Endothelial cell of umbilical vein (primary cell): ENCODE measurements at regions of chr14 and their contacts with region 1.

Region 1: DNA sequence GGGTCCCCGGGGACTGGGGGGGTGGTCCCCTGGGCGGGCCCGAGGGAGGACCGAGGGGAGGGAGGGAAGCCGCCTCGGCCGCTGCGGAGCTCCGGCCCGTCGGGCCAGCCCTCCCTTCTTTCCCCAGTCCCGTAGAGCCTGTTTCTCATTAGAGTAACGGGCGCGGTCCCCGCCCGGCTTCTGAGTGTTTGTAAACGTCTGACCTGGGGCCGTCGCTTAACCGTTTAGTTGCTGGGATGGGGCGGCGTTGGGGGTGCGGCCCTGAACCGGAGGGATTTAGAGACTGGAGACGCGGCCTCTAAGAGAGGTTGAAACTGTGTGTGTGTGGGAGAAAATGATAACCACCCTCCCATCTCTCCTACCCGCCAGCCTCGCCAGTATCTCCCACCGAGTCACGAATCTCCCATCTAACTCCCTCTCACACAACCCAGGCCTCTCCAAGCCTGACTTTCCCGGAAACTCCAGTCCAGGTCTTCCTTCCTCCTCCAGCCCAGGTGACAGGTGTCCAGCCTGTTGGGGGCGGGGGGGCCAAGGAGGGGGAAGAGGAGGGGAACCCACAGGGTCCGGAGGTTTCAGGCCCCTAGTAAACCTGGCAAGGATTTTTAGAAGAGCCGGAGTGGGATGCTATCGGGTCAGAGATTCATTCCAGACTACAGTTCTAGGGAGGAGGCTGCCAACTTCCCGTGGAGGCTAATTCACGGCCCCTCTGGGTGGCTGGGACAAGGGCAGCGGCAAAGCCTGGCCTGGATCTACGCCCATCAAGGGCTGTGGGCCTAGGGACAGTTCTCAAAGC is 1.1 kb upstream of the NFATC4 start:
- DNase-seq: peak; percentile 87
- H3K4me3 ChIP-seq: peak overlapping the region; percentile 24 to 54 (median 31)
- H3K27ac ChIP-seq: peak overlapping the region; percentile 90
- H3K4me1 ChIP-seq: peaks cover 27% of the 10 kb centered on the region
- H3K27me3 ChIP-seq: peaks cover 0 to 2% of the 10 kb centered on the region in 2 experiments
- CTCF ChIP-seq: no peak
- POLR2A ChIP-seq: peak; percentile 32

Region 2: GRCh38 chr14:24241829-24242443 is 125.0 kb before region 1 on chr14:
- CTCF ChIA-PET with region 1: interaction called, 5 read pairs
- POLR2A ChIA-PET with region 1: no interaction called
- dilution Hi-C with region 1: no loop called
- intact Hi-C with region 1: loop called (anchors 2 kb)
- DNase-seq: no peak
- H3K4me3 ChIP-seq: peak overlapping the region; percentile 31 to 67 (median 57)
- H3K27ac ChIP-seq: peak overlapping the region; percentile 98
- H3K4me1 ChIP-seq: peaks cover 30% of the 10 kb centered on the region
- H3K27me3 ChIP-seq: no peaks in the 10 kb centered on the region
- CTCF ChIP-seq: peak; percentile 16 to 75
- POLR2A ChIP-seq: no peak

Region 3: DNA sequence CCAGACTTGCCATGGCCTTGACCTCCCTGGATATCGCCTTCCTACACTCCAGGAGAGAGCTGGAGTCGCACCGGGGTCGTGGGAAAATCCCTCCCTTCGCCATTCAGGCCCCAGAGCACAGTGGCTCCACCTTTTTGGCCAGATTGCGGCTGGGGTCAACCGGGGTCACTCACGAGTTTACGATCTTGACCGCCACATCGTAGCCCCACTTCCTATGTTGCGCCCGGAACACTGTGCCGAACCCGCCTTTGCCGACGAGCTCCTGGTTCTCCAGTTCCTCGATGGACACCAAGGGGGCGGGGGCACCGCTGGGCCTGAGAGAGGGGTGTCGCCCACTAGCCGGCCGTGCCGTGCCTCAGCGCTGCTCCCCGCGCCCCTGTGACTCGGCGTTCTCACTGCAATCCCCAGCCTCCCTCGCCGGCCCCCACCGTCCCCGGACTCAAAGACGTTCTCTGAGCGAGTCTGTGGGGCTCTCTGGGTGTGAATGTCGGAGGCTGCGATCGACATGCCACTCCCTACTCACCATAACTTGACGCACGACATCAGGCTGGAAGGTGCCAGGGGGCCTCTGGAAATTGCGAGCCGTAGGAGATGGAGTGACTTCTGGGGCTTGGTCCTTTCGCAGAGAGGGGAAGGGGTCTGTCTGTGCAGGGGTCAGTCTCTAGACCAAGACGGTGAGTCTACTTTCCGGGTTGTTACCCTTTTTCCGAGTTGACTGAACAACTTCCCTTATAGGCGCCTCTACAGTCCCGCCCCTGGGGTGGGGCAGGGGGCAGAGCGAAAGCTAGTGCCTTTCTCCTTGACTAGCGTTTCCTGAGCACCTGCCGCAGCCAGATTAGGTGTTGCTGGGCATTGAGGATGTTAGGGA is 27.4 kb before region 1 on chr14 and contains the start of gene RIPK3:
- CTCF ChIA-PET with region 1: interaction called, 69 read pairs
- POLR2A ChIA-PET with region 1: no interaction called
- dilution Hi-C with region 1: no loop called
- intact Hi-C with region 1: loop called (anchors 1 kb)
- DNase-seq: peak; percentile 23
- H3K4me3 ChIP-seq: peak within 1 kb of the TSS in 2 of 3 experiments; percentile 5 to 24
- H3K27ac ChIP-seq: no peak within 1 kb of the TSS
- H3K4me1 ChIP-seq: peaks cover 24% of the 10 kb centered on the region
- H3K27me3 ChIP-seq: peaks cover 5 to 9% of the 10 kb centered on the region in 2 experiments
- CTCF ChIP-seq: no peak
- POLR2A ChIP-seq: no peak
- total RNA-seq, gene RIPK3: 5.1 and 9.0 TPM in 2 replicates

Region 4: GRCh38 chr14:24381363-24382063 is 14.6 kb after region 1 on chr14:
- CTCF ChIA-PET with region 1: interaction called, 12 read pairs
- POLR2A ChIA-PET with region 1: no interaction called
- dilution Hi-C with region 1: no loop called
- intact Hi-C with region 1: no loop called
- DNase-seq: no peak
- H3K4me3 ChIP-seq: no peak overlapping the region
- H3K27ac ChIP-seq: no peak overlapping the region
- H3K4me1 ChIP-seq: no peaks in the 10 kb centered on the region
- H3K27me3 ChIP-seq: peaks cover 1 to 6% of the 10 kb centered on the region in 2 experiments
- CTCF ChIP-seq: no peak
- POLR2A ChIP-seq: no peak

Region 5: GRCh38 chr14:24398653-24399446 is 31.9 kb after region 1 on chr14 and contains the start of gene NYNRIN:
- CTCF ChIA-PET with region 1: interaction called, 22 read pairs
- POLR2A ChIA-PET with region 1: no interaction called
- dilution Hi-C with region 1: no loop called
- intact Hi-C with region 1: no loop called
- DNase-seq: peak; percentile 58
- H3K4me3 ChIP-seq: peak within 1 kb of the TSS; percentile 69 to 78 (median 69)
- H3K27ac ChIP-seq: no peak within 1 kb of the TSS
- H3K4me1 ChIP-seq: peaks cover 31% of the 10 kb centered on the region
- H3K27me3 ChIP-seq: no peaks in the 10 kb centered on the region
- CTCF ChIP-seq: no peak
- POLR2A ChIP-seq: peak; percentile 48
- total RNA-seq, gene NYNRIN: 42.8 and 45.1 TPM in 2 replicates

Region 6: GRCh38 chr14:24418492-24418873 is 51.6 kb after region 1 on chr14:
- CTCF ChIA-PET with region 1: interaction called, 86 read pairs
- POLR2A ChIA-PET with region 1: interaction called, 3 read pairs
- dilution Hi-C with region 1: no loop called
- intact Hi-C with region 1: no loop called
- DNase-seq: peak; percentile 78
- H3K4me3 ChIP-seq: no peak overlapping the region
- H3K27ac ChIP-seq: peak overlapping the region; percentile 65
- H3K4me1 ChIP-seq: peaks cover 21% of the 10 kb centered on the region
- H3K27me3 ChIP-seq: no peaks in the 10 kb centered on the region
- CTCF ChIP-seq: no peak
- POLR2A ChIP-seq: peak; percentile 32

Region 7: DNA sequence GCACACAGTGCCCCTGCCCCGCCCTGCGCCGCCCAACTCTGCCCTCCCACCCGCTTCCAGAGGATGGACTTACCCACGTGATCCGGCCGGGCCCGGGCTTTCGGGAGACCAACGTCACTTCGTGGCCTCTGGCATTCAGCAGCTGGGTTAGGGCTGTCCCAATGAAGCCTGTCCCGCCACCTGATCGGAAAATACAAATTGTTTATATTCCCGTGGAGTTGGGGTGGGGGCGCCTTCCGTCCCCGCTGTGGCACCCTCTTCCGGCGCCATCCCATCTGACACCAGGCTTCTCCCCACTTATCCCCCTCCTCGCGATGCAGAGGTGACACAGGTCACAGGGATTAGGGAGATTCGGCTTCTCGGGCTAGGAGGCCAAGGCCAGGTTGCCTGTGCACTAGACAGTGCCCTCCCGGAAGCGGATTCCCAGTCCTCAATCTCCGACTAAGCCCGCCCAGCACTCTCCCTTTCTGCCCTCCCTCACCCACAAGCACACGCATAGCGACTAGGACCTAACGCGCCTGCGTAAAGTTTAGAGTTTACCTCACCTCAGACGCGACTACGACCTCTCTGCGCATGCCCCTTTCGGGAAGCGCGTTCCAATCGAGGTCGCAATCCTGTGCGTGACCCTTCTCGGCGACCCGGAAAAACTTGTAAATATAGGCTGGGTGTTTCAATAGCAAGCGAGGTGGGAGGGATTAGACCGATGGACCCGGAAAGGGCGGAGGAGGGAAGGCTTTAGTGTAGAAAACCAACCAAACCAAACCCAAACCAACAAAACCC is 75.5 kb after region 1 on chr14 and contains the start of gene SDR39U1:
- CTCF ChIA-PET with region 1: interaction called, 70 read pairs
- POLR2A ChIA-PET with region 1: no interaction called
- dilution Hi-C with region 1: no loop called
- intact Hi-C with region 1: no loop called
- DNase-seq: peak; percentile 99
- H3K4me3 ChIP-seq: peak within 1 kb of the TSS; percentile 74 to 88 (median 76)
- H3K27ac ChIP-seq: peak within 1 kb of the TSS; percentile 98
- H3K4me1 ChIP-seq: peaks cover 25% of the 10 kb centered on the region
- H3K27me3 ChIP-seq: no peaks in the 10 kb centered on the region
- CTCF ChIP-seq: no peak
- POLR2A ChIP-seq: peak; percentile 74
- total RNA-seq, gene SDR39U1: 38.6 and 40.2 TPM in 2 replicates